PC-3 (cell line): ENCODE measurements at regions of chr12 and their contacts with region 1.

Region 1: GRCh38 chr12:11891754-11892386 is 178.9 kb upstream of the BCL2L14 start:
- DNase-seq: no peak
- ATAC-seq: no peak
- H3K4me3 ChIP-seq: no peak overlapping the region
- H3K27ac ChIP-seq: no peak overlapping the region
- H3K4me1 ChIP-seq: peaks cover 4% of the 10 kb centered on the region
- H3K27me3 ChIP-seq: no peaks in the 10 kb centered on the region
- CTCF ChIP-seq: no peak; the same call in 1 of the 2 replicates

Region 2: DNA sequence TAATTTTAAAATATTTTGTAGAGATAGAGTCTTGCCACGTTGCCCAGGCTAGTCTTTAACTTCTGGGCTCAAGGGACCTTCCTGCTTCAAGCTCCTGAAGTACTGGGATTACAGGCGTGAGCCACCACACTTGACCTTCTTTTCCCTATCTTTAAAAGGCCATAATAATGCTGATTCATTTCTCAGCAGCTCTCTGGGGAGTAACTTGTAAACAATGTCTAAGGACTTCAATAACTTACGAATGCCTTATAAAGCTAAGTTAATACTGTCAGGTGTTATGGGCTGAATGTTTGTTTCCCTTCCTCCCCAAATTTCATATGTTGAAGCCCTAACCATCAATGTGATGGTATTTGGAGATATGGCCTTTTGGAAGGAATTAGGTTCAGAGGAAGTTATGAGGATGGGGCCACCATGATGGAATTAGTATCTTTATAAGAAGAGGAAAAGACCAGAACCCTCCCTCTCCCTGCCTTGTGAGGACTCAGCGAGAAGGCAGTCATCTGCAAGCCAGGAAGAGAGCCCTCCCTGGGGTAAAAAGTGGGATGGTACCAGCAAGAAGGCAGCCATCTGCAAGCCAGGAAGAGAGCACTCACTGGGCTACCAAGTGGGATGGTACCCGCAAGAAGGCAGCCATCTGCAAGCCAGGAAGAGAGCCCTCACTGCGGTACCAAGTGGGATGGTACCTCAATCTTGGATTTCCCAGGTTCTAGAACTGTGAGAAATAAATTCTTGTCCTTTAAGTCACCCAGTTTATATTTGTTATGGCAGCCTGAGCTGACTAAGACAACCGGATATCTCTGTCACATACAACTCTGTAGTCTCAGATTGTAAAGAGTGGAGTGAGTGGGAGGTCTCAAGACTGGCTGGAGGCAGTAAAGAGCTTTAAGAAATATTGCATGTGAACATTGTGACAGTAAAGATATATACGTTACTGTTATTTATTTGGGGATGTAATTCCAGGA is 1152.4 kb before region 1 on chr12:
- CTCF ChIA-PET with region 1: no interaction called
- POLR2A ChIA-PET with region 1: interaction called, 17 read pairs
- intact Hi-C with region 1: no loop called
- DNase-seq: peak; percentile 49
- ATAC-seq: peak; percentile 58
- H3K4me3 ChIP-seq: no peak overlapping the region
- H3K27ac ChIP-seq: peak overlapping the region; percentile 60
- H3K4me1 ChIP-seq: peaks cover 21% of the 10 kb centered on the region
- H3K27me3 ChIP-seq: no peaks in the 10 kb centered on the region
- CTCF ChIP-seq: no peak

Region 3: DNA sequence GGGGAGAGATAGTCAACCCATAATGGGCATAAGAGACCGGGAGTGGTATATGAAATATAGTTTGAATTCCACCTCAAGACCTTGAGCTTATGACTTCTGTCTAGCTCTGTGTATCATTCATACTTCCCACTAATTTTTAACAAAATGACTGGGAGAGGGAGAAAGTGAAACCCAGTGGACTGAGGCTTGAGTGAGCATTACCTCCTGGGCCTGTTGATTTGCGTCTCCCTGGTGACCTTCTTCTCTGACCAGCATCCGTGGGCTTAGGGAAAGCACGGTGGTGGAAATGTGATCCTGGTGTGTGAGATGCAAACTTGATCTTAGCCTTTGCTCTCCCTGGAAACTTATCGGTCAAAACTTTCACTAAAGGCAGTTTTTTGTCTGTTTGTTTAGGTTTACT is 29.1 kb before region 1 on chr12:
- CTCF ChIA-PET with region 1: no interaction called
- POLR2A ChIA-PET with region 1: no interaction called
- intact Hi-C with region 1: no loop called
- DNase-seq: no peak
- ATAC-seq: no peak
- H3K4me3 ChIP-seq: no peak overlapping the region
- H3K27ac ChIP-seq: no peak overlapping the region
- H3K4me1 ChIP-seq: no peaks in the 10 kb centered on the region
- H3K27me3 ChIP-seq: no peaks in the 10 kb centered on the region
- CTCF ChIP-seq: no peak

Region 4: DNA sequence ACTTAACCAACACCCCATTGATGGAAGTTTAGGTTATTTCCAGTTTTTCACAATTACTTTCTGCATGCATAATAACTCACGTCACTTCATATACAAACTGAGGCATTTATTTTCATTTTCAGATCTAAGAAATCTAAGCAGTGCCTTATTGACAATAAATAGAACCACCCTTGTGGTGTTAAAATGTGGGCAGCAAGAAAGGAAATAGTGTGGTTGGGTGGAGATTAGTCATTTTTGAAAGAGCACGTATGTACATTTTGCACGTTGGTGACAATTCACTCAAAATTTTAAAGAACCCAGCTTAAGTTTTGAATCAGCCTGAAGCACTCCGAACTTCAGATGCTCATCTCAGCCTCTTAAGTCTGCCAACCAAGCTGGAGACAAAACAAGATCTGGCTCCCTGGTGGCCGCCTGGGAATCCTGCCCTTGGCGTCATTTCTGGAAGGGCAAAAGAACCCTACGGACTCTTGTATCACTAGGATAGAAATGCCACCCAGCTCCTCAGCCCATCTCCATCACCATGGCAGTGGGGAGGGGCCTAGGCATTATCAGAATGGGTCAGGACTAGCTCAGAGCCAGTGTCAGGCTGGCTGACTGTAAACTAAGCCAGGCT is 89.4 kb after region 1 on chr12:
- CTCF ChIA-PET with region 1: no interaction called
- POLR2A ChIA-PET with region 1: no interaction called
- intact Hi-C with region 1: no loop called
- DNase-seq: peak; percentile 62
- ATAC-seq: peak; percentile 50
- H3K4me3 ChIP-seq: 0 out of 2 replicates have a peak overlapping the region, but pooled peaks have one; percentile 24
- H3K27ac ChIP-seq: peak overlapping the region; percentile 46
- H3K4me1 ChIP-seq: peaks cover 36% of the 10 kb centered on the region
- H3K27me3 ChIP-seq: no peaks in the 10 kb centered on the region
- CTCF ChIP-seq: no peak